ENCODE measurements at regions of chr12 and their contacts with region 1.

Region 1: DNA sequence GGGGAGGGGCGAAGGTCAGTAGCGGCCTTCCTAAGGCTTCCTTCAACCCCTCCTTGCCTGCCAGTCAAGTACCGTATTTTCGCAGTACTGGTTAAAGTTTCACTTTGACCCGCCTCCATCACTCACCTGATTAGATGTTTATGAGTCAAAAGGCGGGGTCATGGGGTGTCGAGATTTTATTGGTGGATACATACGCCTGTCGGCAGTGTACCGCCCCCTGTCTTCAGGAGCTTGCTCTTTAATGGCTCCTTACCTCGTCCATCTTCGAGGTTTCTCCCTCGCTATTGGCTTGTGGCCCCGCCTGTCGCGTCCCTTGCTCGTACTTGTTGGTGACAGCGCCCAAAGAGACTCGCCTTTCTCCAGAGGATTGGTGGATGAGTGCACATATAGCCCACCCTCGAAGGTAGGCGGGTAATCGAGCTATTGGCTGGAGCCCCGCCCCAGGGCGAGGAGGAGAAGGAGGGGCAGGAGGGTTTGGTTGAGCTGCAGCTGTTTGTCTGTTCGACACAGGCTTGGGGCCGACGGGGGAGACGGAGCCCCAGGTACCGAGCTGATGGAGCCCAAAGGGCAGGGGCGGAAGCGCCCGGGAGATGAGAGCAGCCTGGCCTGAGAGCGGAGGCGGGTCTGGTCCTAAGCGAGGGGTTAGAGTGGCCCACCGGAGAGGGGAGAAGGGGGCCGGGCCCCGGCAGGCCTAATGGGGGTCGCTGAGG is at the start of gene RAB5B:
- DNase-seq: peak; percentile 92 to 100 (median 96)
- ATAC-seq: peak; percentile 86
- H3K4me3 ChIP-seq: peak within 1 kb of the TSS; percentile 74
- H3K4me3 Mint-ChIP-seq: no peak within 1 kb of the TSS
- H3K27ac ChIP-seq: peak within 1 kb of the TSS; percentile 82 to 86
- H3K27ac Mint-ChIP-seq: no peak within 1 kb of the TSS
- H3K4me1 ChIP-seq: peaks cover 26% of the 10 kb centered on the region
- H3K4me1 Mint-ChIP-seq: peaks cover 18% of the 10 kb centered on the region
- H3K27me3 ChIP-seq: no peaks in the 10 kb centered on the region
- H3K27me3 Mint-ChIP-seq: no peaks in the 10 kb centered on the region
- CTCF ChIP-seq: no peak
- total RNA-seq, gene RAB5B: 21.6 to 27.4 TPM

Region 2: DNA sequence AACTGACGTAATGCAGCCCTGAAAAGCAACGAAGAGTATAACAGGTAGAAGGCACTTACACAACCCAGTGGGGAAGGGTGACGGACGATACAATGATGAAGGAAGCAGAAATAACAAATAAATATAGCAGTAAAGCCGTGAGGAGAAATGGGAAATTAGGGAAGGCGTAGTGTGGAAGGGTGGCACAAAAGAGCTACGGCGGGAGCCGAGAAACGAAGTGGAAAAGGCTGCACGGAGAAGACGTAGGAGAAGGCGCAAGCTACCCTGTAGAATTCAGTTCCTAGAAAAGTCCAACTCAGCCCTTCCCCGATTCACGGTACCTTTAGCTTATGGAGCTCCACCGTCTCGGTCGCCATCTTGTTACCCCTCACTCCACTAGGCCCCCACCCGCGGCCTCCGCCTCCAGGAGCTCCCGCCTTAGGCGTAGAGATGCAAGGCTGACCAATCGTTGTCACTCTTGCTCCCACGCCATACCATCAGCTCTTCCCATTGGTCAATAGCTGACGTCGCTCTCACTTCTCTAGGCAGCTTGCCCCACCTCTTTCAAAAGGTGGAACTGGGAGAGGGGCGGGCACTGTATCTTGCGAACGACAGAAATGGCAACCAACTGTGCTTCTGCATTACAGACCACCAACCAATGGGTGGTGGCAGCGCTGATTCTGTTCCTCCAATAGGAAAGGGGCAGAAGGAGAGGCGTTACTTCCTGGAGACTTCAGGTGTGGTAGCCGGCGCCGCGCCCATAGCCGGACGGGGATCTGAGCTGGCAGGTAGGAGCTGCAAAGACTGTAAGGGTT is 156.2 kb before region 1 on chr12 and contains the starts of genes ORMDL2 and SARNP:
- CTCF ChIA-PET with region 1: interaction called, 3 read pairs
- POLR2A ChIA-PET with region 1: interaction called, 67 read pairs
- intact Hi-C with region 1: no loop called
- DNase-seq: peak; percentile 88 to 100 (median 92)
- ATAC-seq: peak; percentile 92
- H3K4me3 ChIP-seq: peak within 1 kb of the TSS; percentile 97
- H3K4me3 Mint-ChIP-seq: no peak within 1 kb of the TSS
- H3K27ac ChIP-seq: peak within 1 kb of the TSS; percentile 71 to 87
- H3K27ac Mint-ChIP-seq: no peak within 1 kb of the TSS
- H3K4me1 ChIP-seq: peaks cover 40% of the 10 kb centered on the region
- H3K4me1 Mint-ChIP-seq: peaks cover 28% of the 10 kb centered on the region
- H3K27me3 ChIP-seq: no peaks in the 10 kb centered on the region
- H3K27me3 Mint-ChIP-seq: no peaks in the 10 kb centered on the region
- CTCF ChIP-seq: no peak
- total RNA-seq, gene ORMDL2: 13.0 to 14.9 TPM
- total RNA-seq, gene SARNP: 38.2 to 38.6 TPM

Region 3: DNA sequence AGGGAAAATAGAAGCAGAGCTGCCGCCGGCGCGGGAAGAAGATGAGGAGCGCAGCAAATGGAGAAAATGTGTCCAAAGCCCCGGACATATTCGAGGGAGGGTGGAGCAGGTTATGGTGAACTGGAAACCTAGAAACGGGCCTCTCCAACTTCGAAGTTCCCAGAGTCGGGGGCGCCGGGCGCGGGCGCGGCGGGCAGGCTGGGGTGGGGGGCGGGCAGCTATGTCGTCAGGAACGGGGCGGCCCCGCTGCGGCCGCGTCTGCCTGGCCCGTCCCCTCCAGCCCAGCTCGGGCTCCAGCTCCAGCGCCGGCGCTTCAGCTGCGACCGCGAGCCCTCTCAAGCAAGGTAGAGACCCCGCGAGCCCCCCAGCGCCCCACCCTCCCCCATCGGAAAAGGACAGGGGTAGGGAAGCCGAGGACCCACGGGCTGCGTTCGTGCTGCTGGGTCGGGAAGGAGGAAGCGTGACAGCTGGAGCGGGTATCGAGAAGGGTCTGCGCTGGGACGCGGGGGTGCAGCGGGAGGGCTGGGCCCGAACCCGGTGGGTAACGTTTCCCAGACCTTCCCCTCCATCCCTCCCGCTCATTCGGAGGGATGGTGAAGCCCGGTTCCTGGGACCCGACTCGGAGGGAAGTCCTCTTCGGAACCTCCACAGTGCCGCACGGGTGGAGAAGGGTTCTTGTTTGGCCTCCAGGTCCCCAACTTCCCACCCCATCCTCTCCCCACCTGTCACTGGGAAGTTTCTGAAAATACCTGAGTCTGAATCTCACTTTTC is 41.8 kb before region 1 on chr12:
- CTCF ChIA-PET with region 1: interaction called, 5 read pairs
- POLR2A ChIA-PET with region 1: interaction called, 80 read pairs
- intact Hi-C with region 1: loop called (anchors 1 to 2 kb)
- DNase-seq: peak in 8 of 14 experiments; percentile 11 to 63 (median 52)
- ATAC-seq: no peak
- H3K4me3 ChIP-seq: peak overlapping the region; percentile 98
- H3K4me3 Mint-ChIP-seq: peak overlapping the region; percentile 99
- H3K27ac ChIP-seq: peak overlapping the region; percentile 83 to 93
- H3K27ac Mint-ChIP-seq: peak overlapping the region; percentile 97
- H3K4me1 ChIP-seq: peaks cover 68% of the 10 kb centered on the region
- H3K4me1 Mint-ChIP-seq: peaks cover 57% of the 10 kb centered on the region
- H3K27me3 ChIP-seq: no peaks in the 10 kb centered on the region
- H3K27me3 Mint-ChIP-seq: no peaks in the 10 kb centered on the region
- CTCF ChIP-seq: no peak

Region 4: DNA sequence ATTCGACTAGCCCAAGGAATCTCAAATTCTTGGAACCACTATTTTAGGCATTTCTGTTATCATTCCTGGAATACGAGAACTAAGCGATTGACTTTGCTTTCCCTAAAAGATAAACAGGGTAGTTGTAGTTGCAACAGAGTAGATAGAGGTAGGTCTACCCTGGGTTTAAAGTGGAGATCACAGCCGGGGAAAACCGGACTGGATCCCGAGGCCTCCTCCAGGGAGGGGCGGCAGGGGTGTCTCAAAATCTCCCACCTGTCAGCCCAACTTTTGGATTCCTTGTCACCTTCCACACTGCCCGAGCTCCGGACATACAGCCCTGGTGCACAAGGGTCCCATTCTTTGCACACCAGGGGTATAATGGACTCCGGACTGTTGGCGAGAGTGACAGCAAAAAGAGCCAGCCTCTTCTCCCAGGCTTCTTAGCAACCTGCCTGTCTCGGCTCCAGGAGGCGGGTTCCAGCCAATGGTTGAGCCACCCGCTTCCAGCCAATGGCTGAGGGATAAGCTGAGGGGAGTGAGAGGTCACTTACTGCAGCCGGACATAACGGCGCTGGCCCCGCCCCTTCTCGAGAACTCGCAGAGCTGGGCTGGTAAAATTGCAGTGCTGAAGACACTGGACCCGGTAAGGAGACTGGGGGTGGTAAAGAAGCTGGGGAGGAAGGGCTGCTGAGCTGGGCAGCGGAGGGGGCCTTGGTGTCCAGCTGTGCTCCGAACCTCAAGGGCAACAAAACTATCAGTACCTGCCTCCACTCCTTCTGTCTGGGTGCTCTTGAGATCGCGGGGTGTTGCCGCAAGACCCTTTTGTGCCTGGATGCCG is 23.2 kb after region 1 on chr12 and contains the start of gene SUOX:
- CTCF ChIA-PET with region 1: interaction called, 18 read pairs
- POLR2A ChIA-PET with region 1: interaction called, 22 read pairs
- intact Hi-C with region 1: no loop called
- DNase-seq: peak in 5 of 14 experiments; percentile 8 to 69 (median 48)
- ATAC-seq: peak; percentile 33
- H3K4me3 ChIP-seq: peak within 1 kb of the TSS; percentile 43
- H3K4me3 Mint-ChIP-seq: peak within 1 kb of the TSS; percentile 51
- H3K27ac ChIP-seq: no peak within 1 kb of the TSS
- H3K27ac Mint-ChIP-seq: no peak within 1 kb of the TSS
- H3K4me1 ChIP-seq: peaks cover 17% of the 10 kb centered on the region
- H3K4me1 Mint-ChIP-seq: peaks cover 23% of the 10 kb centered on the region
- H3K27me3 ChIP-seq: peaks cover 5 to 12% of the 10 kb centered on the region in 2 experiments
- H3K27me3 Mint-ChIP-seq: peaks cover 20% of the 10 kb centered on the region
- CTCF ChIP-seq: no peak
- total RNA-seq, gene SUOX: 0.82 to 1.2 TPM

Region 5: GRCh38 chr12:56104109-56104814 is 130.5 kb after region 1 on chr12 and contains the start of gene PA2G4:
- CTCF ChIA-PET with region 1: no interaction called
- POLR2A ChIA-PET with region 1: interaction called, 23 read pairs
- intact Hi-C with region 1: no loop called
- DNase-seq: peak; percentile 89 to 99 (median 96)
- ATAC-seq: peak; percentile 88
- H3K4me3 ChIP-seq: peak within 1 kb of the TSS; percentile 90
- H3K4me3 Mint-ChIP-seq: peak within 1 kb of the TSS; percentile 93
- H3K27ac ChIP-seq: peak within 1 kb of the TSS; percentile 63 to 95
- H3K27ac Mint-ChIP-seq: peak within 1 kb of the TSS; percentile 100
- H3K4me1 ChIP-seq: peaks cover 48% of the 10 kb centered on the region
- H3K4me1 Mint-ChIP-seq: peaks cover 67% of the 10 kb centered on the region
- H3K27me3 ChIP-seq: no peaks in the 10 kb centered on the region
- H3K27me3 Mint-ChIP-seq: no peaks in the 10 kb centered on the region
- CTCF ChIP-seq: no peak
- total RNA-seq, gene PA2G4: 51.0 to 61.0 TPM

Region 6: DNA sequence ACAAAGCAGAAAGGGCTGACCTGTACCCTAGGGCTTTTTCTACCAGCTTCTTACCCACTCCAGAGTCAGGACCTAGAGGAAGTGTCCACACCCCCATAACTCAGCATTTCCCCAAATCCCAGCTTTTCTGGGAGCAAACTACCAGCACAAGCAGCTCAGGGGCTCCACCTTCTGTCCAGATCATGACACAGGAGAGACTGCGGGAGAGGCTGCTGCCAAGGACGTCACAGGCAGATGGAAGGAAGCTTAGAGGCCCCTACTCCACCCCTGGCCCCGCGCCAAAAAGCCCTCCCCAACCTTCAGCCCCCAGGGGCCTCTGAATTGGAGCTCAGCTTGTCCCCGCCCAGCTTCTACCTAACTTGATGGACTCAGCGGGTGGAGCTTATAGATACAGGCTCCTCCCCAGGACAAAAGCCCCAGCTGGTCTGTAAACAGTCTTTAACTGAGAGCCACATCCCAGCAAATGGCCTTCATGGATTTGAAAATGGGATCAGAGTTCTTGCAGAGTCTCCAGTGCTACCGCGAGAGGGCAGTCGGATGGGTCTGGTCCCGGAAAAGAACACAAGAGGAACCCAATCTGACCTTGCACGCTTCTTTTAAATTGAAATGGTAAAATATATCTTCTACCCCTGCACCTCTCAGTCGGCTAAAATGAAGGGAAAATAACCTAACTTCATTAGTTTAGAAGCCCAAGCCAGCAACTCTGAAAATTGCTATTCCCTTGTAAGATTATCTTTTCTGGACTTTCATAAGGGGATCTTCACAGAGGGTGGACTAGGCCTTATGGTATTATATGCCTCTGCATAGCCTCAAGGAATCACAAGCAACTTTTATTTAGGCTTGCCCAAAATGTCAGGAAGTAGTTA is 663.2 kb after region 1 on chr12:
- CTCF ChIA-PET with region 1: interaction called, 4 read pairs
- POLR2A ChIA-PET with region 1: interaction called, 11 read pairs
- intact Hi-C with region 1: no loop called
- DNase-seq: peak; percentile 87 to 98 (median 93)
- ATAC-seq: peak; percentile 72
- H3K4me3 ChIP-seq: peak overlapping the region; percentile 76
- H3K4me3 Mint-ChIP-seq: peak overlapping the region; percentile 94
- H3K27ac ChIP-seq: peak overlapping the region; percentile 56 to 84
- H3K27ac Mint-ChIP-seq: peak overlapping the region; percentile 98
- H3K4me1 ChIP-seq: peaks cover 56% of the 10 kb centered on the region
- H3K4me1 Mint-ChIP-seq: peaks cover 65% of the 10 kb centered on the region
- H3K27me3 ChIP-seq: no peaks in the 10 kb centered on the region
- H3K27me3 Mint-ChIP-seq: no peaks in the 10 kb centered on the region
- CTCF ChIP-seq: peak; percentile 72